ENCODE measurements at regions of chr2 and their contacts with region 1.

Region 1: GRCh38 chr2:100845141-100845991 is 25.4 kb downstream of the NPAS2 start:
- DNase-seq: peak; percentile 73 to 78
- ATAC-seq: peak; percentile 84 to 98 (median 94)
- H3K4me3 ChIP-seq: no peak overlapping the region
- H3K27ac ChIP-seq: peak overlapping the region in 8 of 10 donors; percentile 44 to 78 (median 63)
- H3K4me1 ChIP-seq: peaks cover 0 to 55% (median 20%) of the 10 kb centered on the region in 9 donors
- H3K27me3 ChIP-seq: no peaks in the 10 kb centered on the region
- CTCF ChIP-seq: no peak

Region 2: GRCh38 chr2:100802066-100802465 is 43.3 kb before region 1 on chr2:
- intact Hi-C with region 1: no loop called
- DNase-seq: no peak
- ATAC-seq: peak in 1 of 8 donors; percentile 62
- H3K4me3 ChIP-seq: no peak overlapping the region
- H3K27ac ChIP-seq: no peak overlapping the region
- H3K4me1 ChIP-seq: peaks cover 0 to 6% (median 0%) of the 10 kb centered on the region in 9 donors
- H3K27me3 ChIP-seq: no peaks in the 10 kb centered on the region
- CTCF ChIP-seq: no peak

Region 3: GRCh38 chr2:100823665-100824438 is 21.5 kb before region 1 on chr2:
- intact Hi-C with region 1: loop called in 1 of 10 experiments (anchors 2 kb)
- DNase-seq: no peak
- ATAC-seq: peak in 1 of 8 donors; percentile 12
- H3K4me3 ChIP-seq: no peak overlapping the region
- H3K27ac ChIP-seq: peak overlapping the region; percentile 8 to 96 (median 80)
- H3K4me1 ChIP-seq: peaks cover 5 to 64% (median 23%) of the 10 kb centered on the region in 9 donors
- H3K27me3 ChIP-seq: peaks cover 0 to 43% (median 0%) of the 10 kb centered on the region in 7 donors
- CTCF ChIP-seq: no peak

Region 4: GRCh38 chr2:100935372-100935752 is 90.0 kb after region 1 on chr2:
- intact Hi-C with region 1: loop called in 1 of 10 experiments (anchors 10 kb)
- DNase-seq: no peak
- ATAC-seq: peak; percentile 53 to 90 (median 80)
- H3K4me3 ChIP-seq: no peak overlapping the region
- H3K27ac ChIP-seq: peak overlapping the region; percentile 58 to 88 (median 74)
- H3K4me1 ChIP-seq: peaks cover 0 to 36% (median 26%) of the 10 kb centered on the region in 9 donors
- H3K27me3 ChIP-seq: no peaks in the 10 kb centered on the region
- CTCF ChIP-seq: no peak